ENCODE measurements at regions of chrX and their contacts with region 1.

Region 1: DNA sequence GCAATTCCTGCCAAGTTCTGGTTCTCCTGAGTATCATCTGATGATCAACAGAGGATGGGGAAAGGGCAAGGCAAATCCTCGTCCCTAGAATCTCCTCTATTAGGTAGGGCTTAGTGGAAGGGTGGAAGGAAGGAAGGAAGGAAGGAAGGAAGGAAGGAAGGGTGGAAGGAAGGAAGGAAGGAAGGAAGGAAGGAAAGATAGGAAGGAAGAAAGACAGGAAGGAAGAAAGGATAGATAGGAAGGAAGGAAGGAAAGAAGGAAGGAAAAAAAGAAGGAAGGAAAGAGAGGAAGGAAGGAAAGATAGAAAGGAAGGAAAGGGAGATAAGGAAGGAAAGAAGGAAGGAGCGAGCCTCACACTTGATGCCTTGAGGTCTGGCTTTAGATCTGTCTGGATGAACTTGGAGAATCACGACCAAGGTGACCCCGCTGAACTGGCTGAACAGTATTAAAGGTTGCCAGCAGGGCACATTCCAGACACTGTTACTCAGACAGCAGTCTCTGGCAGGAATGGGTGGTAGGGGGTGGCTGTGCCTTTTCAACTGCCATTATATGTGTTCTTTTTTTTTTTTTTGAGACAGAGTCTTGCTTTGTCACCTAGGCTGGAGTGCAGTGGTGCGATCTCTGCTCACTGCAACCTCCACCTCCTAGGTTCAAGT is 57.1 kb downstream of the MAP7D2 start:
- DNase-seq: no peak
- ATAC-seq: no peak
- H3K4me3 ChIP-seq: no peak overlapping the region
- H3K4me3 Mint-ChIP-seq: no peak overlapping the region
- H3K27ac ChIP-seq: no peak overlapping the region
- H3K27ac Mint-ChIP-seq: no peak overlapping the region
- H3K4me1 ChIP-seq: no peaks in the 10 kb centered on the region
- H3K4me1 Mint-ChIP-seq: peaks cover 8% of the 10 kb centered on the region
- H3K27me3 ChIP-seq: no peaks in the 10 kb centered on the region
- H3K27me3 Mint-ChIP-seq: no peaks in the 10 kb centered on the region
- CTCF ChIP-seq: no peak

Region 2: GRCh38 chrX:20116579-20117240 is 57.1 kb after region 1 on chrX and contains the start of gene MAP7D2:
- CTCF ChIA-PET with region 1: no interaction called
- POLR2A ChIA-PET with region 1: no interaction called
- intact Hi-C with region 1: loop called in 1 of 2 experiments (anchors 2 kb)
- DNase-seq: no peak
- ATAC-seq: no peak
- H3K4me3 ChIP-seq: no peak within 1 kb of the TSS
- H3K4me3 Mint-ChIP-seq: peak within 1 kb of the TSS; percentile 58
- H3K27ac ChIP-seq: no peak within 1 kb of the TSS
- H3K27ac Mint-ChIP-seq: no peak within 1 kb of the TSS
- H3K4me1 ChIP-seq: no peaks in the 10 kb centered on the region
- H3K4me1 Mint-ChIP-seq: peaks cover 8% of the 10 kb centered on the region
- H3K27me3 ChIP-seq: no peaks in the 10 kb centered on the region
- H3K27me3 Mint-ChIP-seq: peaks cover 13% of the 10 kb centered on the region
- CTCF ChIP-seq: no peak
- total RNA-seq, gene MAP7D2: 0.11 TPM in 1 of 2 experiments, not detected in the other

Measured in CD8-positive, alpha-beta T cell (primary cell).